Right ventricle myocardium superior (tissue), 1 donor: ENCODE measurements at regions of chr1 and their contacts with region 1.

Region 1: GRCh38 chr1:29033829-29034466 is 89.8 kb downstream of the TMEM200B start:
- DNase-seq: no peak
- ATAC-seq: peak; percentile 65

Region 2: DNA sequence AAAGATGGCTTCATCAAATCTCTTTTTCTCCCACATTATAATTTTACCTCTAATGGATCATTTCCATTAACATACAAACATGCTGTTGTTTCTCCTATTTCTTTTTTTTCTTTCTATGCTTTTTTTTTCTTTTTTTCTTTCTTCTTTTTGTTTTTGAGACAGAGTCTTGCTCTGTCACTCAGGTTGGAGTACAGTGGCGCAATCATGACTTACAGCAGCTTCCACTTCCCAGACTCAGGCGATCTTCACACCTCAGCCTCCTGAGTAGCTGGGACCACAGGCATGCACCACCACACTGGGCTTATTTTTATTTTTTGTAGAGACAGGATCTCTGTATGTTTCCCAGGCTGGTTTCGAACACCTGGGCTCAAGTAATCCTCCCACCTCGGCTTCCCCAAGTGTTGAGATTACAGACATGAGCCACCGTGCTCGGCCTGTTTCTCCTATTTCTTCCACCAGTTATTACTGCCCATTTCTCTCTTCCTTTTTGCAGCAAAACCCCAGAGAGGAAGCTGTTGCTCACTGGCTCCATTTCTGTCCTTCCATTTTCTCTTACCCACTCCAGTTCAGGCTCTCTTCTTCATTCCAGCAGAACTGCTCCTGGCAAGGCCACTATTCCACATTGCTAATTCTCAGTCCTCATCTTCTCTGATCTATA is 254.1 kb before region 1 on chr1:
- intact Hi-C with region 1: loop called (anchors 10 kb)
- DNase-seq: no peak
- ATAC-seq: no peak

Region 3: GRCh38 chr1:29171089-29171488 is 137.1 kb after region 1 on chr1:
- intact Hi-C with region 1: no loop called
- DNase-seq: no peak
- ATAC-seq: peak; percentile 19